Activated CD4-positive, alpha-beta memory T cell treated with anti-CD3 and anti-CD28 coated beads for 36 hours (primary cell): ENCODE measurements at regions of chr2 and their contacts with region 1.

Region 1: DNA sequence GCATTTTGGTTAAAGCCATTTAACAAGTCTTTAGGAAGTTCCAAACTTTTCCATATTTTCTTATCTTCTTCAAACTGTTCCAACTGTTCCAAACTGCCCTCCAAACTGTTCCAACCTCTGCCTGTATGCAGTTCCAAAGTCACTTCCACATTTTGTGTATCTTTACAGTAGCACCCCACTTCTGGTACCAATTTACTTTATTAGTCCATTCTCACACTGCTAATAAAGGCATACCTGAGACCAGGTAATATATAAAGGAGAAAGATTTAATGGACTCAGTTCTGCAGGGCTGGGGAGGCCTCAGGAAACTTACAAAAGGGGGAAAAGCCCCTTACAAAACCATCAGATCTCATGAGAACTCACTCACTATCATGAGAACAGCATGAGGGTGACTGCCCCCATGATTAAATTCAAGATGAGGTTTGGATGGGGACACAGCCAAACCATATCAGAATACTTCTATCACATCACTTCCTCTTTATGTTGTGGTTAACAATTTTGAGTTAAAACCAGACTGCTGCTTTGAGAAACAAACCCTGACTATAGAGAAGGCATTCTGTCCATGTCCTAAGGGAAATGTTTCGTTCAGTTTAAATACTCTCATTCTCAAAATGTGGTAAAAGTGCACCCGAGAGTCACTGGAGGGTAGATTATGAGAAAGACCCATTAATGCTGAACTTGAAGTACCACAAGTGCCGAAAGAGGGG is 11.0 kb downstream of the IL18R1 start:
- DNase-seq: peak; percentile 36
- H3K4me3 Mint-ChIP-seq: peak overlapping the region; percentile 31
- H3K27ac Mint-ChIP-seq: peak overlapping the region; percentile 87
- H3K4me1 Mint-ChIP-seq: peaks cover 68% of the 10 kb centered on the region
- H3K27me3 Mint-ChIP-seq: no peaks in the 10 kb centered on the region

Region 2: DNA sequence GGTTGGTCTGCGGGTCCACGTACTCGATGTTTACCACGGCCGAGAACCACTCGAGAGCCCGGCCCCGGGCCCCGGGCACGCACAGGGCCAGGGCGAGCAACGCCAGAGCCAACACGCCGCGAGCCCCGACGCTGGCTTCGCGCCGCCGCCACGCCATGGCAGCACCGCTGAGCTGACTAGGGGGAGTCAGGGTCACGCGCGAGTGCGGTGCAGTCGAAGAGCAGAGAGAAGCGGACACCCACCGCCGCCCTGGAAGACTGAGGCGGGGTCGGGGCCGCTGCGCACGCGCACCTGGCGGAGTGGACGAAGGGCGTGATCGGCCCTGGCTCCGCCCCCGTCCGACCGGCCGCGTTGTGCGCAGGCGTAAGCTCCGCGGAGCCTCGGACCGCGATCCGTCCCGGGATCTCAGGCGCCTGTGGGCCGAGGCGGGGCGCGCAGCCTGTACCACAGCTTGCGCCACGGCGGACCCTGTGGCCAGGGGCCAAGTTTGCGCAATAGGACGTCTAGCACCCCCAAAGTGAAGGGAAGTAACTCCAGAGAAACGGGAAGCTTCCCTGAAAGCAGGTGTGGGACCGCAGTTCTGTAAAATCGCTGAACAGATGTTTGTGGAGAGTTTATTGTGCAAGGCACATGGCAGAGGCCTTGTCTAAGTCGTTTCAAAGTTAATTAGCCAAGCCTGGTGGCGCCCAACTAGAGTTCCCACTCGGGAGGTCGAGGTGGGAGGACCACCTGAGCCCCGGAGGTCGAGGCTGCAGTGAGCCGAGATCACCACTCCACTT is 1057.9 kb before region 1 on chr2 and contains the start of gene RNF149:
- CTCF ChIA-PET with region 1: no interaction called
- POLR2A ChIA-PET with region 1: no interaction called
- intact Hi-C with region 1: loop called (anchors 2 kb)
- DNase-seq: peak; percentile 92
- H3K4me3 Mint-ChIP-seq: peak within 1 kb of the TSS; percentile 98
- H3K27ac Mint-ChIP-seq: peak within 1 kb of the TSS; percentile 97
- H3K4me1 Mint-ChIP-seq: peaks cover 65% of the 10 kb centered on the region
- H3K27me3 Mint-ChIP-seq: no peaks in the 10 kb centered on the region
- total RNA-seq, gene RNF149: 42.1 to 46.9 TPM

Region 3: DNA sequence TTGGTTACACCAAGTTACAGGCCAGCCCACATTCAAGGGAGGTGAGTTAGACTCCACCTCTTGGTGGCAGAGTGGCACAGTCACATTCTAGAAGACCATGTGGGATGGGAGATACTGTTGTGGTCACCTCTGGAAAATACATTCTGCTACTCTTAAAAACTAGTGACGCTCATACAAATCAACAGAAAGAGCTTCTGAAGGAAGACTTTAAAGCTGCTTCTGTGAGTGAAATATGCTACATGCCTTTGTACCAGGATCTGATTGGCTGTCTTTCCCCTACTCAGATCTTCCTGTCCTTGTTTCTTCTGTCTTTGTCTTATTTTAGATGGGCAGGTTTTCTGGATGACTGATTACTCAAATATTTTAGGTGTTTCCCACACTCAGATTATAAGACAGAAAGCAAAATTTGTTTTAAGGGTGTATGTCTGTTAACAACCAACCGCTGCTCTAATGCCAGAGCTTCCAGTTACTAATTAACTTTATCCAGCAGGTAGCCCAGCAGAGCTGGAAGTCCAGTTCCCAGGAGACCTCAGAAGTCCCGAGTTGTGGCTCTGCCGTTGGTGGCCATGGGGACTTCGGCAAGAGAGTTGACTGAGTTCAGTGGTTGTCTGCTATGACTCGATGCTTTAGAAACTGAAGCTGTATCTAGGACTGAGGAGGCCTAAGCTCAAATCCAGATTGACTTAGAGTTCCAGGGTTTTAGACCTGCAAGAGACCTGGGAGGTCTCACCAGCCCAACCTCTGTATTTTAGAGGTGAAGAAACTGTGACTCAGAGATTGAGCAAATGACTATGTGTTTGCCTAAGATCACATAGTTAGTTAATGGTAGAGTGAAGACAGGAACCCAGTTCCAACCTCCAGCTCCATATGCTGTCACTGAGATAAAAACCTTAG is 367.4 kb before region 1 on chr2:
- CTCF ChIA-PET with region 1: no interaction called
- POLR2A ChIA-PET with region 1: interaction called, 3 read pairs
- intact Hi-C with region 1: loop called (anchors 1 kb)
- DNase-seq: peak; percentile 71
- H3K4me3 Mint-ChIP-seq: peak overlapping the region; percentile 66
- H3K27ac Mint-ChIP-seq: peak overlapping the region; percentile 93
- H3K4me1 Mint-ChIP-seq: peaks cover 36% of the 10 kb centered on the region
- H3K27me3 Mint-ChIP-seq: peaks cover 14% of the 10 kb centered on the region

Region 4: GRCh38 chr2:102138331-102138730 is 228.2 kb before region 1 on chr2:
- CTCF ChIA-PET with region 1: no interaction called
- POLR2A ChIA-PET with region 1: no interaction called
- intact Hi-C with region 1: loop called (anchors 2 kb)
- DNase-seq: no peak
- H3K4me3 Mint-ChIP-seq: no peak overlapping the region
- H3K27ac Mint-ChIP-seq: peak overlapping the region; percentile 70
- H3K4me1 Mint-ChIP-seq: peaks cover 59% of the 10 kb centered on the region
- H3K27me3 Mint-ChIP-seq: peaks cover 24% of the 10 kb centered on the region

Region 5: GRCh38 chr2:102301867-102302362 is 64.6 kb before region 1 on chr2:
- CTCF ChIA-PET with region 1: interaction called, 5 read pairs
- POLR2A ChIA-PET with region 1: interaction called, 6 read pairs
- intact Hi-C with region 1: loop called (anchors 1 kb)
- DNase-seq: peak; percentile 65
- H3K4me3 Mint-ChIP-seq: peak overlapping the region; percentile 4
- H3K27ac Mint-ChIP-seq: peak overlapping the region; percentile 55
- H3K4me1 Mint-ChIP-seq: peaks cover 45% of the 10 kb centered on the region
- H3K27me3 Mint-ChIP-seq: peaks cover 4% of the 10 kb centered on the region

Region 6: DNA sequence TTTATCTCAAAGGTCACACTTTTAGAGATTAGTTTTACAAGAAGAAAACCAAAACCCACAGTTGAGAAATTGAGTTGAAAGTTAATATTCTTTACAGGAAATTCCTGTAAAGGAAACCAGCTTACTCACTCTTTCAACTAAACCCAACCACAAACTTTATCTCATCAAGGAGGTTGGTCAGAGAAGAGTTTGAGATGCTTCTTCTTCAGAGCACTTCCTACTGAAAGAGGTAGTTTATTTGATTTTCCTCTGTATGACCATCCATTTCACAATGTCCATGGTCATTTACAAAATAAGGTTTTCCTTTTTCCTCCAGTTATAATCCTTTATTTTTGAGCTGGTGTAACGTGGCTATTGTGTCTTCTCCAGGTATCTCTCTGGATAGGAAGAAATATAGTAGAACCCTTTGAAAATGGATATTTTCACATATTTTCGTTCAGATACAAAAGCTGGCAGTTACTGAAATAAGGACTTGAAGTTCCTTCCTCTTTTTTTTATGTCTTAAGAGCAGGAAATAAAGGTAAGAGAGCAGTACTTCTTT is 51.9 kb after region 1 on chr2:
- CTCF ChIA-PET with region 1: interaction called, 3 read pairs
- POLR2A ChIA-PET with region 1: interaction called, 4 read pairs
- intact Hi-C with region 1: loop called (anchors 1 kb)
- DNase-seq: no peak
- H3K4me3 Mint-ChIP-seq: peak overlapping the region; percentile 64
- H3K27ac Mint-ChIP-seq: peak overlapping the region; percentile 85
- H3K4me1 Mint-ChIP-seq: peaks cover 59% of the 10 kb centered on the region
- H3K27me3 Mint-ChIP-seq: peaks cover 6% of the 10 kb centered on the region